ENCODE measurements at regions of chr12 and their contacts with region 1.

Region 1: GRCh38 chr12:8609061-8609570 is 3.5 kb downstream of the AICDA start:
- DNase-seq: peak in 1 of 35 experiments; percentile 34
- ATAC-seq: peak in 1 of 4 experiments; percentile 36
- H3K4me3 ChIP-seq: no peak overlapping the region
- H3K4me3 Mint-ChIP-seq: peak overlapping the region; percentile 47 to 75 (median 64)
- H3K27ac ChIP-seq: no peak overlapping the region
- H3K27ac Mint-ChIP-seq: no peak overlapping the region
- H3K4me1 ChIP-seq: peaks cover 0 to 4% of the 10 kb centered on the region in 2 experiments
- H3K4me1 Mint-ChIP-seq: peaks cover 11% of the 10 kb centered on the region in 3 donors
- H3K27me3 ChIP-seq: peaks cover 0 to 9% of the 10 kb centered on the region in 2 experiments
- H3K27me3 Mint-ChIP-seq: peaks cover 5 to 9% of the 10 kb centered on the region in 2 donors

Region 2: GRCh38 chr12:8559676-8560075 is 49.4 kb before region 1 on chr12:
- CTCF ChIA-PET with region 1: no interaction called
- POLR2A ChIA-PET with region 1: no interaction called
- DNase-seq: no peak
- ATAC-seq: no peak
- H3K4me3 ChIP-seq: no peak overlapping the region
- H3K4me3 Mint-ChIP-seq: no peak overlapping the region
- H3K27ac ChIP-seq: no peak overlapping the region
- H3K27ac Mint-ChIP-seq: no peak overlapping the region
- H3K4me1 ChIP-seq: no peaks in the 10 kb centered on the region
- H3K4me1 Mint-ChIP-seq: no peaks in the 10 kb centered on the region
- H3K27me3 ChIP-seq: peaks cover 0 to 2% of the 10 kb centered on the region in 2 experiments
- H3K27me3 Mint-ChIP-seq: peaks cover 0 to 10% of the 10 kb centered on the region in 2 donors

Region 3: GRCh38 chr12:8890313-8891085 is 281.4 kb after region 1 on chr12:
- CTCF ChIA-PET with region 1: interaction called in 1 of 2 experiments, 11 read pairs
- POLR2A ChIA-PET with region 1: no interaction called
- DNase-seq: peak in 34 of 35 experiments; percentile 14 to 79 (median 44)
- ATAC-seq: peak; percentile 81 to 84 (median 82)
- H3K4me3 ChIP-seq: peak overlapping the region; percentile 60 to 65
- H3K4me3 Mint-ChIP-seq: peak overlapping the region; percentile 60 to 90 (median 87)
- H3K27ac ChIP-seq: peak overlapping the region; percentile 23
- H3K27ac Mint-ChIP-seq: peak overlapping the region; percentile 76 to 79
- H3K4me1 ChIP-seq: peaks cover 0 to 3% of the 10 kb centered on the region in 2 experiments
- H3K4me1 Mint-ChIP-seq: peaks cover 0 to 5% (median 4%) of the 10 kb centered on the region in 3 donors
- H3K27me3 ChIP-seq: peaks cover 0 to 4% of the 10 kb centered on the region in 2 experiments
- H3K27me3 Mint-ChIP-seq: no peaks in the 10 kb centered on the region

Measured in T-cell (primary cell).